MCF 10A (cell line): ENCODE measurements at regions of chr12 and their contacts with region 1.

Region 1: GRCh38 chr12:22473212-22473611 is 71.1 kb downstream of the C2CD5 start:
- DNase-seq: no peak
- H3K4me3 Mint-ChIP-seq: no peak overlapping the region
- H3K27ac Mint-ChIP-seq: no peak overlapping the region
- H3K4me1 Mint-ChIP-seq: peaks cover 13% of the 10 kb centered on the region
- H3K27me3 Mint-ChIP-seq: no peaks in the 10 kb centered on the region
- CTCF ChIP-seq: no peak

Region 2: DNA sequence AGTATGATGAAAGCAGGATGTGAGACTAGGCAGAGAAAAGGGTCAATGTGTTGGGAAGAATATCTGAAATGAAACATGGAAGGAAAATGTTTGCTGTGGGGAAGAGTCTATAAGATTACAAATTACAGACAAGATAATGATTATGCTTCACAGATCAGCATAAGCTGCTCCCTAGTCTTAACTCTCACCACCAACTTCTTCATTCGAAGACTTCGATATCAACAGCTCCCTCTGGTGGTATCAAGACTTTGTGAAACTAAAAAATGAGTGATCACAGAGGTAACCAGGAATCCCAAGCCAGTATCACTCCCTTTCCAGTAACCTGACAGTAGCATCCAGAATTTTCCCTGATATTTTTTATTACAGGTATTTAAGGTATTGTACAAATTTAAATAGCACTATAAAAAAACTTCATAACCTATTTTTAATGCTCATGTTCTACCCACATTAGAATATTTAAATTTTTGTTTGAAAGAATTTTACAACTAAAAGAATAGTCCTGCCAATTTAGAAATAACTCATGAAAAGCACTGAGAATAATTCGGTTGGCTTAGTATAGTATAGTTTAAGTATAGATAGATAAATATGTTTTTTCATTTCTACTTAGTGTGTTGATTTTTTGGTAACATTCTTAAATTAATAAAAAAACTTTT is 13.2 kb before region 1 on chr12:
- CTCF ChIA-PET with region 1: interaction called, 43 read pairs
- POLR2A ChIA-PET with region 1: interaction called, 3 read pairs
- intact Hi-C with region 1: no loop called
- DNase-seq: peak; percentile 64
- H3K4me3 Mint-ChIP-seq: no peak overlapping the region
- H3K27ac Mint-ChIP-seq: no peak overlapping the region
- H3K4me1 Mint-ChIP-seq: no peaks in the 10 kb centered on the region
- H3K27me3 Mint-ChIP-seq: no peaks in the 10 kb centered on the region
- CTCF ChIP-seq: peak; percentile 55